ENCODE measurements at regions of chr10 and their contacts with region 1.

Region 1: DNA sequence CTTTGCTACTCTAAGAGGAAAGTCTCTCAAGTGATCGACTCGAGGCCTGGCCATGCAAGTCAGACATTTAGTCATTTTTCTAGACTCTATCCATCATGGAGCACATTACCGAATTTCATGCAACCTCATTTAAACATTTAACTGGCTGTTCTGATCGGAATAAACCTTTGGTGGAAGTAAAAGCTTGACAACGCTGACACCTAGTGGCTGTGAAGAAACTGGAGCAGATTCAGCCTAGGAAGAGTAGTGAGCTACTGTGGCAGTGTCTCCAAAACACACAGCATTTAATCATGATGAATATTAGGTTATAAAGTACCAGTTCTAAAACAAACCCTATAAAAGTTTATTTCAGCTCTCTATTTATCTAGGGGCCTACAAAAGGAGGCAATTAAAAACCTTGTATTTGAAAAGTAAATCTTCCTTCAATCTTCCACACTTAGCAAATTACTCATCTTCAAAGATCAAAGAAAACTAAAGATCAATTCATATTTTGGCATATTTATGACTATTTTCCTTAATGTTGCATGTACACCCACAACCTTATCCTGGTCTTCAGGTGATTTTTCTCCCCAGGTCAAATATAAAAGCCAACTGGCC is 175.0 kb downstream of the CTNNA3 start:
- DNase-seq: peak; percentile 94
- ATAC-seq: peak; percentile 85
- H3K4me3 ChIP-seq: no peak overlapping the region
- H3K27ac ChIP-seq: no peak overlapping the region
- H3K4me1 ChIP-seq: peaks cover 17% of the 10 kb centered on the region
- H3K27me3 ChIP-seq: peaks cover 18% of the 10 kb centered on the region
- CTCF ChIP-seq: peak; percentile 100

Region 2: GRCh38 chr10:66301078-66301477 is 1219.9 kb before region 1 on chr10:
- CTCF ChIA-PET with region 1: no interaction called
- POLR2A ChIA-PET with region 1: no interaction called
- intact Hi-C with region 1: loop called (anchors 5 kb)
- DNase-seq: peak; percentile 57
- ATAC-seq: peak; percentile 71; the same call in 1 of the 2 replicates
- H3K4me3 ChIP-seq: no peak overlapping the region
- H3K27ac ChIP-seq: no peak overlapping the region
- H3K4me1 ChIP-seq: no peaks in the 10 kb centered on the region
- H3K27me3 ChIP-seq: no peaks in the 10 kb centered on the region
- CTCF ChIP-seq: peak; percentile 62

Region 3: DNA sequence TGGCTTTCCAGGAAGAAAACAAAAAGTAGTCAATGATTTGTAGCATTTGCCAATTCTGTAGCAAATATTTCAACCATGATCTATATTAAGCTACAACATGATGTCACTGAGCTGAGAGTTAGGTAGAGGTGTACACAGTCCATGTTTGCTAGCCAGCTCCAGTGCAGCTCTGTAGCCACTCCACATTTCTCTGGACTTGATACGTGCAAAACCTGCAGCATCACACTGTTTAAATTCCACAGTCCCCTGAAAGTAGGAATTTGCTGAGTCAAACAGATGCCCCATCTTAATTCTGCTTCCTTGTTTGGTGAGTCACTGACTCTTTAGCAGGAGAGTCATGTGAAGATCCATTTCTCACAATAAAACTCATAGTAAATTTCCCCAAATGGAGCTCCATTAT is 685.0 kb before region 1 on chr10:
- CTCF ChIA-PET with region 1: no interaction called
- POLR2A ChIA-PET with region 1: no interaction called
- intact Hi-C with region 1: no loop called
- DNase-seq: peak; percentile 99
- ATAC-seq: peak; percentile 60
- H3K4me3 ChIP-seq: no peak overlapping the region
- H3K27ac ChIP-seq: peak overlapping the region; percentile 51
- H3K4me1 ChIP-seq: peaks cover 47% of the 10 kb centered on the region
- H3K27me3 ChIP-seq: no peaks in the 10 kb centered on the region
- CTCF ChIP-seq: no peak

Region 4: GRCh38 chr10:66862687-66863258 is 658.2 kb before region 1 on chr10:
- CTCF ChIA-PET with region 1: no interaction called
- POLR2A ChIA-PET with region 1: no interaction called
- intact Hi-C with region 1: loop called (anchors 10 kb)
- DNase-seq: no peak
- ATAC-seq: no peak
- H3K4me3 ChIP-seq: no peak overlapping the region
- H3K27ac ChIP-seq: no peak overlapping the region
- H3K4me1 ChIP-seq: peaks cover 13% of the 10 kb centered on the region
- H3K27me3 ChIP-seq: no peaks in the 10 kb centered on the region
- CTCF ChIP-seq: no peak

Region 5: DNA sequence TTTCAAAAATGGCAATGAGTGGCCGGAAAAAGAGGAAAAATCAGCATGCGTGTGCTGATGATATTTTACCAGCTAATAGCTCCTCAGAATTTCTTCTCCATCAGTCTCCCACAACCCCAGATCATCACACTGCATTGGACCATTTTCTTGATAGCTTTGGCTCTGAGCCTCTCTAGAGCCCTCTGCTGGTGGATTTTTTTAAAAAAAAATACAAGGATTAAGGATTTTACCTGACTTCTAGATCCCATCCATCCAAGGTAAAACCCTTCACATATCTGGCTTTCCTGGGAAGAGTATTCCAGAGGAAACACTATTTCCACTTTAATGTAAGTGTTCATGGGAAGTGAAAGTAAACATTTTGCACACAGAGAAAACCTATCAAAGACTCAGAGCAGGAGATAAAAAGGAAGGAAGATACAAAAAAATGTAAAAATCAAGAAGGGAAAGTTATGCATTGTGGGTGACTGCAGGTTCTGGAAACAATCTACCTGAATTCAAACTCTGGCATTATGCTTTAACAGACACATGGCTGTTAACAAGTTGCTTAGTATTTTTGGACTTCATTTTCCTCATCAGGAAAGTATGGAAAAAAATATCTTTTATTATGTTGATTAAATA is 214.3 kb before region 1 on chr10:
- CTCF ChIA-PET with region 1: interaction called, 6 read pairs
- POLR2A ChIA-PET with region 1: no interaction called
- intact Hi-C with region 1: loop called (anchors 1 kb)
- DNase-seq: peak; percentile 88
- ATAC-seq: peak; percentile 81
- H3K4me3 ChIP-seq: no peak overlapping the region
- H3K27ac ChIP-seq: no peak overlapping the region
- H3K4me1 ChIP-seq: no peaks in the 10 kb centered on the region
- H3K27me3 ChIP-seq: peaks cover 35% of the 10 kb centered on the region
- CTCF ChIP-seq: peak; percentile 95

Region 6: GRCh38 chr10:67492317-67493019 is 28.6 kb before region 1 on chr10:
- CTCF ChIA-PET with region 1: interaction called, 3 read pairs
- POLR2A ChIA-PET with region 1: interaction called, 3 read pairs
- intact Hi-C with region 1: loop called (anchors 1 kb)
- DNase-seq: peak; percentile 88
- ATAC-seq: peak; percentile 92
- H3K4me3 ChIP-seq: peak overlapping the region; percentile 21
- H3K27ac ChIP-seq: peak overlapping the region; percentile 40
- H3K4me1 ChIP-seq: peaks cover 19% of the 10 kb centered on the region
- H3K27me3 ChIP-seq: no peaks in the 10 kb centered on the region
- CTCF ChIP-seq: no peak

Region 7: GRCh38 chr10:67779465-67780203 is 258.6 kb after region 1 on chr10:
- CTCF ChIA-PET with region 1: interaction called, 3 read pairs
- POLR2A ChIA-PET with region 1: no interaction called
- intact Hi-C with region 1: loop called (anchors 5 kb)
- DNase-seq: peak; percentile 95
- ATAC-seq: peak; percentile 78
- H3K4me3 ChIP-seq: no peak overlapping the region
- H3K27ac ChIP-seq: no peak overlapping the region
- H3K4me1 ChIP-seq: peaks cover 11% of the 10 kb centered on the region
- H3K27me3 ChIP-seq: no peaks in the 10 kb centered on the region
- CTCF ChIP-seq: peak; percentile 95

Measured in PC-3 (cell line).